Body of pancreas (tissue), 4 donors: ENCODE measurements at regions of chr20 and their contacts with region 1.

Region 1: DNA sequence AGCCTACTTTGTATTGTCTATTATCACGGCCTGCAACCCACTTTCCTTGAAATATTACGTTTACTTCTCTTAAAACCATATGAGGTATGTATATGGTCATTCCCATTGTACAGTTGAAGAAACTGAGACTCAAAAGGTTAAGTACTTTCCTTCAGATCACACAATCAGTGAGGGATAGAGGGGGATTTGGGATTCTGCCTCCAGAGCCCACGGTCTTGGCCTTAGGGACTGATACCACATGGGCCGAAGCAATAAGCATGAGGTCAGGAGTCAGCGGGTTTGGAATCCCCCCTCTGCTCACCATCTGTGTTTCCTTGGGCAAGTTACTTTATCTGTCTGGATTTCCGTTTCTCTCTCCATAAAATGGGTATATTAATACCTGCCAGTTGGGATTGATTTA is 19.4 kb upstream of the EPB41L1 start:
- DNase-seq: no peak
- ATAC-seq: no peak
- H3K4me3 ChIP-seq: no peak overlapping the region
- H3K27ac ChIP-seq: no peak overlapping the region
- H3K4me1 ChIP-seq: peaks cover 4% of the 10 kb centered on the region
- H3K27me3 ChIP-seq: no peaks in the 10 kb centered on the region
- CTCF ChIP-seq: no peak
- POLR2A ChIP-seq: no peak

Region 2: DNA sequence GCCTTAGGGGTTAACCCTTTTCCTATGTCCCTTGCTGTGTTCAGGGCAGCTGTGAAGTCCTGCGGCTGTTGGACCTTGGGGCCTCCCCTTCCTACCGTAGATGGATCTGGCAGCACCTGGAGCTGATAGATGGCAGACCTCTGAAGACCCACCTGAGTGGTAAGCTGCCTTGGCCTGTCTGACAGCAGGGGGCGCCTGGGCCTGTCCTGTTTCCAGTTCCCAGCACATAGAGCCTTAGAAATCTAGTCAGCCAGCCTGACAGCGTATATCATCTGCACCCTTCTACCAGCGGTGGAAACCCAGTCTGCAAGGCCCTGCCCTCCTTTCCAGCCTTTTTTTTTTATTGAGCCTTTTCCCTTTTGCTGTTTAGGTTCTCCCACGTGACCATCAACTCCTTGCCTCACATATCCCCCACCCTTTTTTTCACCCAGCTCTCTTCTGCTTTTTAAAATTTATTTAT is 140.1 kb before region 1 on chr20:
- intact Hi-C with region 1: loop called (anchors 5 kb)
- DNase-seq: peak; percentile 85 to 93 (median 86)
- ATAC-seq: peak; percentile 88
- H3K4me3 ChIP-seq: no peak overlapping the region
- H3K27ac ChIP-seq: no peak overlapping the region
- H3K4me1 ChIP-seq: no peaks in the 10 kb centered on the region
- H3K27me3 ChIP-seq: no peaks in the 10 kb centered on the region
- CTCF ChIP-seq: peak; percentile 83 to 90 (median 89)
- POLR2A ChIP-seq: no peak

Region 3: GRCh38 chr20:36259177-36260061 is 124.3 kb after region 1 on chr20:
- intact Hi-C with region 1: no loop called
- DNase-seq: no peak
- ATAC-seq: no peak
- H3K4me3 ChIP-seq: no peak overlapping the region
- H3K27ac ChIP-seq: no peak overlapping the region
- H3K4me1 ChIP-seq: no peaks in the 10 kb centered on the region
- H3K27me3 ChIP-seq: no peaks in the 10 kb centered on the region
- CTCF ChIP-seq: no peak
- POLR2A ChIP-seq: no peak

Region 4: GRCh38 chr20:36408219-36408618 is 273.1 kb after region 1 on chr20:
- intact Hi-C with region 1: no loop called
- DNase-seq: peak; percentile 33 to 52 (median 44)
- ATAC-seq: no peak
- H3K4me3 ChIP-seq: no peak overlapping the region
- H3K27ac ChIP-seq: no peak overlapping the region
- H3K4me1 ChIP-seq: no peaks in the 10 kb centered on the region
- H3K27me3 ChIP-seq: no peaks in the 10 kb centered on the region
- CTCF ChIP-seq: no peak
- POLR2A ChIP-seq: no peak